ENCODE measurements at regions of chr5 and their contacts with region 1.

Region 1: GRCh38 chr5:80191991-80192398 is 63.9 kb downstream of the SERINC5 start:
- DNase-seq: peak; percentile 88
- H3K4me3 Mint-ChIP-seq: peak overlapping the region; percentile 83
- H3K27ac Mint-ChIP-seq: peak overlapping the region; percentile 88
- H3K4me1 Mint-ChIP-seq: peaks cover 76% of the 10 kb centered on the region
- H3K27me3 Mint-ChIP-seq: no peaks in the 10 kb centered on the region

Region 2: DNA sequence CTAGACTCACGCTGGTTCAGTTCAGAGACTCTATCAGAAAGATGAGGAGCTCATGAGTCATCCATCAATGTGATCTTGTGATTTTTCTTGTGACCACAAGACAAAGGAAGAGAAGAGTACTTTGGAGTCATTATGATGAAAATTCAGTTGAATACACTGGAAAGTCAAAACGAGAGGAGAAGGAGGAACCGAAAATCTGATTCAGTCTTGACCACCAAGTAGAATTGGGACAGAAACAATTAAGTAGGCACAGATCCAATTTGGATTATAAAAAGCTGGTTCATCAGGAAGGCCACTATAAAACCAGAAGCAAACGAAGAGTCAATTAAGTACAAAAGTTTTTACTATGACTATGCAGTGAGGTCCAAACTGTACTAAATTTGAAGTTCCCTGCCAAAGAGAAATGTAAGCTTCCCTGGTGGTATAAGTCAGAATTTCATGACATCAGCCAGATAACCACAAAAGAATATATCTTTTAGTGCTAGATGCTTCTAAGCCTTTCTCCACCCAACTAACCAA is 66.0 kb before region 1 on chr5:
- intact Hi-C with region 1: loop called (anchors 2 kb)
- DNase-seq: peak; percentile 78
- H3K4me3 Mint-ChIP-seq: peak overlapping the region; percentile 26
- H3K27ac Mint-ChIP-seq: peak overlapping the region; percentile 70
- H3K4me1 Mint-ChIP-seq: peaks cover 28% of the 10 kb centered on the region
- H3K27me3 Mint-ChIP-seq: no peaks in the 10 kb centered on the region

Region 3: GRCh38 chr5:80141147-80141671 is 50.8 kb before region 1 on chr5:
- intact Hi-C with region 1: loop called (anchors 2 kb)
- DNase-seq: no peak
- H3K4me3 Mint-ChIP-seq: no peak overlapping the region
- H3K27ac Mint-ChIP-seq: peak overlapping the region; percentile 84
- H3K4me1 Mint-ChIP-seq: peaks cover 51% of the 10 kb centered on the region
- H3K27me3 Mint-ChIP-seq: no peaks in the 10 kb centered on the region

Region 4: GRCh38 chr5:80181618-80182211 is 10.3 kb before region 1 on chr5:
- intact Hi-C with region 1: loop called (anchors 1 kb)
- DNase-seq: peak; percentile 87
- H3K4me3 Mint-ChIP-seq: peak overlapping the region; percentile 63
- H3K27ac Mint-ChIP-seq: peak overlapping the region; percentile 92
- H3K4me1 Mint-ChIP-seq: peaks cover 65% of the 10 kb centered on the region
- H3K27me3 Mint-ChIP-seq: no peaks in the 10 kb centered on the region

Region 5: GRCh38 chr5:80246001-80246758 is 54.2 kb after region 1 on chr5:
- intact Hi-C with region 1: loop called (anchors 2 kb)
- DNase-seq: no peak
- H3K4me3 Mint-ChIP-seq: peak overlapping the region; percentile 55
- H3K27ac Mint-ChIP-seq: peak overlapping the region; percentile 68
- H3K4me1 Mint-ChIP-seq: peaks cover 41% of the 10 kb centered on the region
- H3K27me3 Mint-ChIP-seq: no peaks in the 10 kb centered on the region

Region 6: DNA sequence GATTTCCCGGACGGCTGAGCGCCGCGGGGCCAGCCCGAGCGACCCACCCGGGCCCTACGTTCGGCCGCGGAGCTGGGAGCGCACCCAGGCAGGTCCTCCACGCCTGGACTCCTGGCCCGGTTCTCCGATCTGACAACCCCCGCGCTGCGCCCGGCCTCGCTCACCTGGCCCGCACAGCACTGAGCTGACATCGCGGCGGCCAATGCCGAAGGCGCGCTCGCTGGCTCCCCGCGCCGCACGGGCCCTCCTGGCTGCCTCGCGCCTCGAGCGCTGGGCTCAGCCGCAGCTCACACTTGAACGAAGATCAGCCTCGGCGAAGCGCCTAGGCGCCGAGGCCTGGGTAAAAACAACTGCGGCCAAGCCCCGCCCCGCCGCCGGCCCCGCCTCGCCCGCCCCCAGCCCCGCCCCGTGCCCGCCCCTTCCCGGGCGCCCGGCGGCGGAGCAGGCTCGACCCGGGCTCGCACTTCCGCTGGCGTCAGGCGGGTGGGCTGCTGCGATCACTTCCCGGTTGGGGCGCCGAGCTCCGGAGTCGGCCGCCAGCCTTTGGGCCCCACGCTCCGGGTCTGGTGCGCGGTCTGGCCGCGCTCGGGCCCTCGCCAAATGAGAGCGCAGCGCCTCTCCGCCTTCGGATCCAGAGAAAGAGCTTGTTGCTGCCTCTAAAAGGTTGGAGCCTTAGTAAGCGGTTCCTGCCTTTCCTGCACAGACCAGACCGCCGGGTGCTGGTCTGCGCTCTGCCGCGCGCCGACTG is 63.9 kb after region 1 on chr5 and contains the start of gene SERINC5:
- intact Hi-C with region 1: loop called (anchors 2 kb)
- DNase-seq: peak; percentile 95
- H3K4me3 Mint-ChIP-seq: peak within 1 kb of the TSS; percentile 97
- H3K27ac Mint-ChIP-seq: peak within 1 kb of the TSS; percentile 99
- H3K4me1 Mint-ChIP-seq: peaks cover 44% of the 10 kb centered on the region
- H3K27me3 Mint-ChIP-seq: no peaks in the 10 kb centered on the region
- total RNA-seq, gene SERINC5: 19.2 and 21.3 TPM in 2 replicates

Region 7: DNA sequence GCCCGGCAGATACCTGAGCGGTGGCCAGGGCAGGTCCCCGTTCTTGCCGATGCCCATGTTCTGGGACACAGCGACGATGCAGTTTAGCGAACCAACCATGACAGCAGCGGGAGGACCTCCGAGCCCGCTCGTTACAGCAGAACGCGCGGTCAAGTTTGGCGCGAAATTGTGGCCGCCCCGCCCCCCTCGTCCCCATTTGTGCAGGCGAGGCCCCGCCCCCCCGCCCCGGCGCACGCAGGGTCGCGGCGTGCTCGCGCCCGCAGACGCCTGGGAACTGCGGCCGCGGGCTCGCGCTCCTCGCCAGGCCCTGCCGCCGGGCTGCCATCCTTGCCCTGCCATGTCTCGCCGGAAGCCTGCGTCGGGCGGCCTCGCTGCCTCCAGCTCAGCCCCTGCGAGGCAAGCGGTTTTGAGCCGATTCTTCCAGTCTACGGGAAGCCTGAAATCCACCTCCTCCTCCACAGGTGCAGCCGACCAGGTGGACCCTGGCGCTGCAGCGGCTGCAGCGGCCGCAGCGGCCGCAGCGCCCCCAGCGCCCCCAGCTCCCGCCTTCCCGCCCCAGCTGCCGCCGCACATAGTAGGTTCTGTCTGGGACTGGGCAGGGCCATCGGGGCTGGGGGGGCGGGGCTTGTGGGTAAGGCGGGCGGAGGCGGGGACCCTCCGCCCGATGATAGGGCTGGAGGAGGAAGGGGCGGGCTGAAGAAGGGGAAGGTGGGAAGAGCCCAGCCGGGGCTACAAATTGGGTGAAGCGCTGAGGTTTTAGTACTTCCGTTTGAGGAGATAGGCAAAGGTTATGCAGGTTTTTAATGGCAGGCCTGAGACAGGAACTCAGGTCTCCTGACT is 462.6 kb after region 1 on chr5 and contains the starts of genes DHFR and MSH3:
- intact Hi-C with region 1: loop called (anchors 10 kb)
- DNase-seq: peak; percentile 96
- H3K4me3 Mint-ChIP-seq: peak within 1 kb of the TSS; percentile 84
- H3K27ac Mint-ChIP-seq: peak within 1 kb of the TSS; percentile 93
- H3K4me1 Mint-ChIP-seq: peaks cover 23% of the 10 kb centered on the region
- H3K27me3 Mint-ChIP-seq: no peaks in the 10 kb centered on the region
- total RNA-seq, gene DHFR: 66.5 and 73.4 TPM in 2 replicates
- total RNA-seq, gene MSH3: 21.0 and 21.1 TPM in 2 replicates